HCT116 (cell line): ENCODE measurements at regions of chr6 and their contacts with region 1.

Region 1: GRCh38 chr6:32933636-32934085 is 7.2 kb downstream of the HLA-DMB start:
- DNase-seq: peak; percentile 56
- ATAC-seq: peak; percentile 92
- H3K4me3 ChIP-seq: no peak overlapping the region
- H3K27ac ChIP-seq: no peak overlapping the region
- H3K4me1 ChIP-seq: no peaks in the 10 kb centered on the region; a peak in 1 of 4 replicates
- H3K27me3 ChIP-seq: no peaks in the 10 kb centered on the region
- CTCF ChIP-seq: peak; percentile 82 to 90 (median 90)
- POLR2A ChIP-seq: no peak
- RAD21 ChIP-seq: peak; percentile 74

Region 2: GRCh38 chr6:32885698-32886286 is 47.9 kb before region 1 on chr6:
- CTCF ChIA-PET with region 1: interaction called, 10 read pairs
- POLR2A ChIA-PET with region 1: no interaction called
- RAD21 ChIA-PET with region 1: interaction called in 1 of 2 experiments, 3 read pairs
- intact Hi-C with region 1: loop called (anchors 5 kb)
- DNase-seq: peak; percentile 72
- ATAC-seq: peak; percentile 80
- H3K4me3 ChIP-seq: no peak overlapping the region
- H3K27ac ChIP-seq: no peak overlapping the region
- H3K4me1 ChIP-seq: peaks cover 0 to 7% of the 10 kb centered on the region in 2 experiments; a peak in 2 of 4 replicates
- H3K27me3 ChIP-seq: no peaks in the 10 kb centered on the region
- CTCF ChIP-seq: peak; percentile 33 to 80 (median 64)
- POLR2A ChIP-seq: no peak
- RAD21 ChIP-seq: peak; percentile 86

Region 3: DNA sequence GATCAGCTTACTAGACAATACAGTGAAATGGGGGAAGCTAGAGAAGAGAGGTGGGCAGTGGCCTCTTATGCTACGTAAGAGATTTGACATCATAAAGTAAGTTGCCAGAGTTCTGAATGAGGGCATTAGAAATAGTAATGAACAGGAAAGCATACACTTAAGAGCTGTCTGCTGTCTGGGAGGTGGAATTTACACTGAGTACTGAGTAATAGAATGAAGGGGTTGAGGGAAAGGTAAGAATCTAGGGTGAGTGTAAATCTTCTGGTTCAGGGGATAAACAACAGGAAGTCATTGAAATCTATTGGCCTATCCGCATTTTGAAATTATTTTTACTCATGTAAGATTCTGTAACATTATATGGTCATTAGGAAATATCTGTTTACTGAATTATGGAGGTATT is 28.6 kb before region 1 on chr6:
- CTCF ChIA-PET with region 1: interaction called, 13 read pairs
- POLR2A ChIA-PET with region 1: no interaction called
- RAD21 ChIA-PET with region 1: no interaction called
- intact Hi-C with region 1: no loop called
- DNase-seq: no peak
- ATAC-seq: no peak
- H3K4me3 ChIP-seq: no peak overlapping the region
- H3K27ac ChIP-seq: no peak overlapping the region
- H3K4me1 ChIP-seq: no peaks in the 10 kb centered on the region
- H3K27me3 ChIP-seq: no peaks in the 10 kb centered on the region
- CTCF ChIP-seq: no peak
- POLR2A ChIP-seq: no peak
- RAD21 ChIP-seq: no peak

Region 4: DNA sequence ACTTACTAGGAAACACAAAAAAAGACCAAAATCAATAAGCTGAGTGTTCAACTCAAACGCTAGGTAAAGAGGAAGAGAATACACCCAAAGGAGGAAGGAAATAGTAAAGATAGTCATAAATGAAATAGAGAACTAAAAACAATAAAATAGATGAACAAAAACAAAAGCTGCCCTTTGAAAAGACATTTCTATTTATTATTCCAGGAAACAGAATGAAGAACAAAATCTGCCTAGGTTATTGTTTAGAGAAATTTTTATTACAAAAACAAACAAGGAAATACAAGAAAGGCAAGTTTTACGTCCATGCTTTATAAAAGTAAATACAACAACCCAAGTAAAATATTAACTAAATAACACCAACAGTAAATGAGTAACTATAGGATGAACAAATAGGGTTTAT is 12.9 kb before region 1 on chr6:
- CTCF ChIA-PET with region 1: interaction called, 27 read pairs
- POLR2A ChIA-PET with region 1: no interaction called
- RAD21 ChIA-PET with region 1: no interaction called
- intact Hi-C with region 1: no loop called
- DNase-seq: no peak
- ATAC-seq: no peak
- H3K4me3 ChIP-seq: no peak overlapping the region
- H3K27ac ChIP-seq: no peak overlapping the region
- H3K4me1 ChIP-seq: no peaks in the 10 kb centered on the region
- H3K27me3 ChIP-seq: no peaks in the 10 kb centered on the region
- CTCF ChIP-seq: no peak
- POLR2A ChIP-seq: no peak
- RAD21 ChIP-seq: no peak

Region 5: DNA sequence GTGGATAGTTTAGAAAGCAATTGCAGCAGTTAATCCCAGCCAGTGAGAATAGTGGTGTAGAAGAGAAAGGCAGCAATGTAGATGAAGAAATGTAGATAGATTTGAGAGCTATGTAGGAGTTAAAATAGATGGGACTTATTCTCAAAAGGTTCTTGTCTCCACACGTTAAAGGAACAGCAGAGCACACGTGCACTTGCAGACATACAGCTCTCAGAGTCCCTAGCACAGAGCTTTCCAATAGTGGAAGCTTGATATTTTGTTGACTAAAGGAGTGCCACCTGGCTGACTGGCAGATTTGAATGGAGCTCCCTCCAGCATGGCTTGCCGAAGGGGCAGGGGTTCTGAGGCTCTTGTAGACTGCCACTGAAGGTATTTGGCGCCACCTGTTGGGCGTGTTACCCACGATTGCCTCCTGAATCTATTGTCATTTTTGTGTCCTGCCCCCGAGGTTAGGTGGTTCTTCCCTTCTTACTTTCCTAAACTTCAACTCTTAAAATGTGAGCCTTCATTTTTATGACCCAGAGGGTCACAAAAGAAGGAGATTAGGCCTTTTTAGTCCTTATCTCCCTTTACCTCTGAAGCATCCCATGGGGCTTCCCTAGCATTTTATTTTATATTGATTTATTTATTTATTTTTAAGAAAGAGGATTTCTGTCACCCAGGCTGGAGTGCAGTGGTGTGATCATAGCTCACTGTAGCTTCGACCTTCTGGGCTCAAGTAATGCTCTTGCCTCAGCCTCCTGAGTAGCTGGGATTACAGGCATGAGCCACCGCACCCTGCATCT is 51.1 kb after region 1 on chr6:
- CTCF ChIA-PET with region 1: interaction called, 79 read pairs
- POLR2A ChIA-PET with region 1: interaction called, 5 read pairs
- RAD21 ChIA-PET with region 1: interaction called, 8 to 10 read pairs
- intact Hi-C with region 1: loop called (anchors 1 kb)
- DNase-seq: peak; percentile 77
- ATAC-seq: peak; percentile 81
- H3K4me3 ChIP-seq: no peak overlapping the region
- H3K27ac ChIP-seq: no peak overlapping the region
- H3K4me1 ChIP-seq: no peaks in the 10 kb centered on the region
- H3K27me3 ChIP-seq: no peaks in the 10 kb centered on the region
- CTCF ChIP-seq: peak; percentile 84 to 95 (median 90)
- POLR2A ChIP-seq: no peak
- RAD21 ChIP-seq: peak; percentile 98

Region 6: DNA sequence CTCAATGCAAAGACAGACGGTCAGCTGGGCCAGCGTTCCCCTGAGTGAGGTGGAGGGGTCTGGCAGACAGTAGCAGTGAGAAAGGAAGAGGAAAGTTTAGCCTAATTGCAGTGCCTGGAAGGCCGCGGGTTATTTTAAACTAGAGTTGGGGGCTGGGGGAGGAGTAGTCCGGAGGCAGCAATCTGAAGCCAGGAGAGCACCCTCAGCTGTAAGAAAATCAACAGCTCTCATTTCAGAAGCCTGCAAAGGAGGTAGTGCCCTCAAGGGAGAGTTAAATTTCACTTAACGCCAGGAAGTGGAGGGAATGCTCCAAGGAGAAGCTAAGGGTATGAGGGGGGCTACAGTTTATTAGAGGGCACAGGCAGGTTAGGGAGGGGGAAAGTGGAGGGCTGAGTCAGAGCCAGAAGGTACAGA is 301.6 kb after region 1 on chr6:
- CTCF ChIA-PET with region 1: no interaction called
- POLR2A ChIA-PET with region 1: no interaction called
- RAD21 ChIA-PET with region 1: no interaction called
- intact Hi-C with region 1: no loop called
- DNase-seq: no peak
- ATAC-seq: no peak
- H3K4me3 ChIP-seq: no peak overlapping the region
- H3K27ac ChIP-seq: no peak overlapping the region
- H3K4me1 ChIP-seq: no peaks in the 10 kb centered on the region
- H3K27me3 ChIP-seq: no peaks in the 10 kb centered on the region; the same call in 1 of the 2 replicates
- CTCF ChIP-seq: no peak
- POLR2A ChIP-seq: no peak
- RAD21 ChIP-seq: no peak